H1 (cell line): ENCODE measurements at regions of chr6 and their contacts with region 1.

Region 1: DNA sequence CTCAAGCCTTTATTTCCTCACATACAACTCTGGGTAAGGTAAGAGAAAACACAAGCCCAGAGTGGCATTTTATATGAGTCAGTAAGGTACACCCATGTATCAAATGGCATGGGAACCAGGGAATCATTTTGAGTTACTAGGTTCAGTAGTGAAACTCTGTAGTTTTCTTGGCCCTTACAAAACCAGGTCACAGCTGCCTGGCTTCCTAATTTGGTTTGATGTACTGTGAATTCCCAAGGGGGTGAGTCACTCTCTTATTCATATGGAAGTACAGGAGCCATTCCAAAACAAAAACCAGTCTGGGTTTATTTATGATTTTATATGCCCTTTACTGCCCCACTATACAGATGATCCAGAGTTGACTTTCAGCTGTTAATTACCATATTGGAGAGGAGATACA is 70.7 kb downstream of the PDE7B start:
- DNase-seq: peak in 1 of 2 experiments; percentile 23
- H3K4me3 ChIP-seq: peak overlapping the region in 1 of 4 experiments; percentile 33; a peak in 1 of 8 replicates
- H3K27ac ChIP-seq: no peak overlapping the region
- H3K4me1 ChIP-seq: peaks cover 0 to 2% (median 0%) of the 10 kb centered on the region in 4 experiments; a peak in 2 of 7 replicates
- H3K27me3 ChIP-seq: no peaks in the 10 kb centered on the region
- CTCF ChIP-seq: no peak
- EP300 ChIP-seq: no peak
- POLR2A ChIP-seq: no peak
- RAD21 ChIP-seq: no peak

Region 2: DNA sequence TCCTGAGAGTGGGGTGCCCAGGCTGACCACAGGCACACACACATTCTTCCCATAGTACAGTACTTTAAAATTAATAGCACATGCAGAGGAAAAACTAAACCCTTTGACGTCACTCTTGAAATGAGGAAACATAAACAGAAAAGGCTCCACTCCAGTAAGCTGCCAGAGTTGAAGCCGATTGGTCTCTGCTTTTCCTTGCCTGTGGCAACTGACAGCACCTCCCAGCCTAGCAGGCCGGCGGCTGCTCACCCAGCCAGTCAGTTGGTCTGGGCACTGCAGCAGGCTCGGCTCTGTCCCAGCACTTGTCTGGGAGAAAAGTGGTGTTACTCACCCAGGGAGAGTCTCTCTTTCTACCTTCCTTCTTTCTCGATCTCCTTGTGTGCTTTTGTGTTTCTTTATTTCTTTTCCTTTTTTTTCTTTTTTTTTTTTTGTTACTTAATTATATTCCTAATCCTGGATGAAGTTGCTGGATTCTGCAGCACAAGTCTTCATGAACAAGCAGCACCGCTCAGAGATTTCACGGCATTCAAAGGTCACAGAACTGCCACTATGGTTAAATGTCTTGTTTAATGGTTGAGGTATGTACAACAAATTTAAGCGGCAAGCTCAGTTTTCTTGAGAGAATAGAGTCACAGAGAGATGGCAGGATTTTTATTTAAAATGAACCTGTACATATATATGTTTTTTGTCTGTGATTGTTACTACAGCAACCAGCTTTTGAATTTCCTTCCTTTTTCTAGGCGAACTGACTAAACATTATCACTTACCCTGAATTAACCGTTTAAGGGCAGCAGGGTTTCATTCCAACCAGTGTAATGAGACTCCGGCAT is 70.5 kb before region 1 on chr6 and contains the start of gene PDE7B:
- CTCF ChIA-PET with region 1: no interaction called
- POLR2A ChIA-PET with region 1: no interaction called
- DNase-seq: peak; percentile 36 to 55
- H3K4me3 ChIP-seq: no peak within 1 kb of the TSS
- H3K27ac ChIP-seq: no peak within 1 kb of the TSS
- H3K4me1 ChIP-seq: no peaks in the 10 kb centered on the region
- H3K27me3 ChIP-seq: no peaks in the 10 kb centered on the region
- CTCF ChIP-seq: no peak
- EP300 ChIP-seq: no peak
- POLR2A ChIP-seq: no peak
- RAD21 ChIP-seq: no peak
- total RNA-seq, gene PDE7B: not detected in 2 replicates

Region 3: DNA sequence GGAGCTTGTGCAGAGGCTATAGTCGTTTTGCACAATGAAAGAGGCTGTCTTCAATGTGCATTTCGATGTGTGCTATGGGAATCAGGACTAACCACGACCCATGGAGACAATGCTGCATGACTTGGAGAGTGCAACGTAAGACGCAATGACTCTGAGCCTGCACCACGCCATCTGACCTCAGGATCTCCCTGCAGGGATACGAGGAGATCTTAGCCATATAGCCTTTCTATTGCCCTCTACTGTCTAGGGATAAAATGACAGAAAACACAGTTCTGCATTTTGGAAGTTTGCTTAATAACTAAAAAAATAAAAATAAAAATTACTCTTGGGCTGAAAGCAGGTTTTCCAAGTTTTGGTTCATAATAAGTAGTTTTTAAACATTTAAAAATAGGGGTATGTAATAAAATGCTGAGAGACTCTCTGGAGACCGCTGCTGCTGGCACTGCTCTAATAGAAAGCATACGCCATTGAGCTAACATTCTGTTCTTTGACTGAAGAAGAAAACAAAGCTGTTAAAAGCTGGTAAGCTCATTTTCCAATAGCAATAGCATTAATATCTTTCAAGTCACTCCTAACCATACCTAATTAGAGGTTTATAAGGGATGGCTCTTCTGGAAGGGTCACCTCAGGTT is 16.5 kb after region 1 on chr6:
- CTCF ChIA-PET with region 1: interaction called, 17 read pairs
- POLR2A ChIA-PET with region 1: no interaction called
- DNase-seq: no peak
- H3K4me3 ChIP-seq: no peak overlapping the region
- H3K27ac ChIP-seq: no peak overlapping the region
- H3K4me1 ChIP-seq: no peaks in the 10 kb centered on the region
- H3K27me3 ChIP-seq: no peaks in the 10 kb centered on the region
- CTCF ChIP-seq: peak in 2 of 3 experiments; percentile 50 to 54; a peak in 3 of 4 replicates
- EP300 ChIP-seq: no peak
- POLR2A ChIP-seq: no peak
- RAD21 ChIP-seq: peak; percentile 42 to 60

Region 4: GRCh38 chr6:135951169-135951568 is 29.0 kb after region 1 on chr6:
- CTCF ChIA-PET with region 1: no interaction called
- POLR2A ChIA-PET with region 1: no interaction called
- DNase-seq: no peak
- H3K4me3 ChIP-seq: no peak overlapping the region
- H3K27ac ChIP-seq: no peak overlapping the region
- H3K4me1 ChIP-seq: no peaks in the 10 kb centered on the region
- H3K27me3 ChIP-seq: no peaks in the 10 kb centered on the region
- CTCF ChIP-seq: no peak
- EP300 ChIP-seq: no peak
- POLR2A ChIP-seq: no peak
- RAD21 ChIP-seq: no peak

Region 5: GRCh38 chr6:136095986-136096385 is 173.8 kb after region 1 on chr6:
- CTCF ChIA-PET with region 1: no interaction called
- POLR2A ChIA-PET with region 1: no interaction called
- DNase-seq: no peak
- H3K4me3 ChIP-seq: no peak overlapping the region
- H3K27ac ChIP-seq: no peak overlapping the region
- H3K4me1 ChIP-seq: no peaks in the 10 kb centered on the region
- H3K27me3 ChIP-seq: peaks cover 0 to 2% (median 0%) of the 10 kb centered on the region in 4 experiments; a peak in 2 of 7 replicates
- CTCF ChIP-seq: no peak
- EP300 ChIP-seq: no peak
- POLR2A ChIP-seq: no peak
- RAD21 ChIP-seq: no peak